PC-9 (cell line): ENCODE measurements at regions of chr16 and their contacts with region 1.

Region 1: GRCh38 chr16:22232277-22233042 is 26.4 kb downstream of the EEF2K start:
- DNase-seq: peak; percentile 92 to 94
- H3K4me3 ChIP-seq: peak overlapping the region; percentile 7; the same call in 1 of the 2 replicates
- H3K27ac ChIP-seq: peak overlapping the region; percentile 79
- H3K4me1 ChIP-seq: peaks cover 34% of the 10 kb centered on the region
- H3K27me3 ChIP-seq: no peaks in the 10 kb centered on the region
- CTCF ChIP-seq: no peak

Region 2: GRCh38 chr16:22091758-22092600 is 140.5 kb before region 1 on chr16 and contains the start of gene VWA3A:
- CTCF ChIA-PET with region 1: interaction called, 10 read pairs
- POLR2A ChIA-PET with region 1: no interaction called
- intact Hi-C with region 1: no loop called
- DNase-seq: peak; percentile 39 to 76
- H3K4me3 ChIP-seq: no peak within 1 kb of the TSS
- H3K27ac ChIP-seq: no peak within 1 kb of the TSS
- H3K4me1 ChIP-seq: no peaks in the 10 kb centered on the region; the same call in 1 of the 2 replicates
- H3K27me3 ChIP-seq: no peaks in the 10 kb centered on the region
- CTCF ChIP-seq: no peak
- total RNA-seq, gene VWA3A: 0.73 and 0.83 TPM in 2 replicates

Region 3: GRCh38 chr16:22297114-22297878 is 64.8 kb after region 1 on chr16 and contains the start of gene POLR3E:
- CTCF ChIA-PET with region 1: no interaction called
- POLR2A ChIA-PET with region 1: no interaction called
- intact Hi-C with region 1: loop called (anchors 2 kb)
- DNase-seq: peak; percentile 89 to 100
- H3K4me3 ChIP-seq: peak within 1 kb of the TSS; percentile 78
- H3K27ac ChIP-seq: peak within 1 kb of the TSS; percentile 84
- H3K4me1 ChIP-seq: no peaks in the 10 kb centered on the region
- H3K27me3 ChIP-seq: no peaks in the 10 kb centered on the region
- CTCF ChIP-seq: peak; percentile 86
- total RNA-seq, gene POLR3E: 65.2 and 70.9 TPM in 2 replicates

Region 4: DNA sequence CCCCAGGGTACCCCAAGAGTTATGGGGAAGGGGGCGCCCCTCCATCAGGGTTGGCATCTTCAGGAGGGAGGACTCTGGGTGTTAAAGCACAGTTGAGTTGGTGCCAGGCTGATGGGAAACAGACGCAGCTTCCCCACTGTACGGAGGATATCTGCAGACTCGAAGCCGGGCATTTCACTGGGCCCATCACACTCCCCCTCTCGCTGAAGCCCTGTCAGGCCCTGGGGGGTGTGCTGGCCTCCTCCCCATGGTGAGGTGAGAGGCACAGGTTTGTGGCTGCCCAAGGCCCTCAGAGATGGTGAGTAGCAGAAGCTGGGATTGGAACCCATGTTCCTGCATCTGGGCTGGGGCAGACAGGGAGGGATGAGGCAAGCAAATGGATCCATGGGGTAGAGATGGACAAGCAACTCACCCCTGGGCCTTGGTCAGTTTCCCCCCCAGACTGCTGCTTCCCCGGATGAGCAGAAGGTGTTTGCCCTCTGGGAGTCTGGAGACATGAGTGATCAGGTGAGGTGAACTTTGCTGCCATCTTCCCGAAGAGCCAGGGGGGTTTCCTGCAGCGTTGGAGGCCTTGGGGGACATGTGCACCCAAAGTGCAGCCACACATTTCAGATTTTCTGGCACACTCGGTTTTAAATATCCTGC is 95.7 kb after region 1 on chr16:
- CTCF ChIA-PET with region 1: no interaction called
- POLR2A ChIA-PET with region 1: interaction called, 21 read pairs
- intact Hi-C with region 1: no loop called
- DNase-seq: no peak
- H3K4me3 ChIP-seq: no peak overlapping the region
- H3K27ac ChIP-seq: no peak overlapping the region
- H3K4me1 ChIP-seq: no peaks in the 10 kb centered on the region
- H3K27me3 ChIP-seq: no peaks in the 10 kb centered on the region
- CTCF ChIP-seq: no peak

Region 5: DNA sequence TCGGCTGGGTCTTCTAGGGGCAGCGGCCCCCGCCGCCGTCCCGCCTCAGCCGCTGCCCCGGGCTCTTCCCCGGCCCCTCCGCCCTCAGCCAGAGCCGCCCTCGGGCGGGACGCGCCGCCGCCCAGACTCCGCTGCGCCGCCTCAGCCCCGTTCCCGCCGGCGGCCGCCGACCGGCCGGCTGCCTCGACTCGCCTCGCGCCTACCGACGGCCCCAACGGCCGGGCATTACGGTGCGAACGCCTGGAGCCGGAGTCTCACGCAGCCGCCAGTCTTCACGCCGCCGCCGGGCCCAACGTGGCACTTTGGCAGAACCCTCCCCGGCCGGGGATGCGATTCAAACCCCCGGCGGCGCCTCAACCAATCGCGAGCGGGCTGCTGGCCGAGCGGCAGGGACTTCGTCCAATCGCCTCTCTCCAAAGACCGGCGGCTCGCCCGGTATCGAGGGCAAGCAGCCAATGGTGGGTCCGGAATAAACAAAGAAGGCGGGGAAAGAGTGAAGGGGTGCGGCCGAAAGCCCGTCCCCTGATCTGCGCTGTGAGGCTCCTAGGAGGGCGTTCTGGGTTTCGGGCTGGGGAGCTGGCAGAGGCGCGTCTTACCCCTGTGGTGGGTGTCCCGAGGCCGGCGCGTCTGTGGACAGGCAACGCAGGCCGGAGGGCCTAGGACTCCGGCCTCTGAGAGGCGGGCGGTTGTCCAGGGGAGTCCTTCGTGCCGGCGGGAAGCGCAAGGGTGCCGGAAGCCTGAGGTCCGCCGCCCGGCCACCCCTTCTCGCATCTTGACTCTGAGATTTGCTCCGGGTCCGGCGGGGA is 142.1 kb after region 1 on chr16 and contains the start of gene CDR2:
- CTCF ChIA-PET with region 1: no interaction called
- POLR2A ChIA-PET with region 1: no interaction called
- intact Hi-C with region 1: no loop called
- DNase-seq: peak; percentile 91 to 99
- H3K4me3 ChIP-seq: peak within 1 kb of the TSS; percentile 95
- H3K27ac ChIP-seq: peak within 1 kb of the TSS; percentile 45; the same call in 1 of the 2 replicates
- H3K4me1 ChIP-seq: peaks cover 39% of the 10 kb centered on the region
- H3K27me3 ChIP-seq: no peaks in the 10 kb centered on the region
- CTCF ChIP-seq: no peak
- total RNA-seq, gene CDR2: 29.3 and 34.0 TPM in 2 replicates